AG04449 (cell line): ENCODE measurements at regions of chr1 and their contacts with region 1.

Region 1: GRCh38 chr1:191993549-191993948 is 164.7 kb upstream of the RGS18 start:
- DNase-seq: peak; percentile 14
- H3K4me3 ChIP-seq: no peak overlapping the region
- CTCF ChIP-seq: peak; percentile 35

Region 2: DNA sequence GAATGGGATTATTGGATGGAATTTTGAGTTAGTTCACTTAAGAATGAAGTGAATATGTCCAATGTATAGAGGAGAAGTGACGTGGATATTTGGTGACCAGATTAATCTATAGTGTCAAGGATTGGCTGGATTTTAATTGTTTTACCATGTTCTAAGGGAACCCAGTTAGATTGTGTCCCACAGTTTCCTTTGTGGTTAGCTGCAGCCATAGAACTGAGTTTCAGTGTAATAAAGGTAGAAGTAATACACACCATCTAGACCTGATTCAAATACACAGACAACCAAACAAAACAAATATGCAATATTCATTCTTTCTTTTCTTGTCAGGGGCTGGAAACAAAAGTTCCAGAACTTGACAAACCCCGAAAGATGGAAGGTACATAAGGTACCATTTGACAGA is 76.7 kb after region 1 on chr1:
- CTCF ChIA-PET with region 1: no interaction called
- POLR2A ChIA-PET with region 1: no interaction called
- DNase-seq: no peak
- H3K4me3 ChIP-seq: no peak overlapping the region
- CTCF ChIP-seq: no peak

Region 3: DNA sequence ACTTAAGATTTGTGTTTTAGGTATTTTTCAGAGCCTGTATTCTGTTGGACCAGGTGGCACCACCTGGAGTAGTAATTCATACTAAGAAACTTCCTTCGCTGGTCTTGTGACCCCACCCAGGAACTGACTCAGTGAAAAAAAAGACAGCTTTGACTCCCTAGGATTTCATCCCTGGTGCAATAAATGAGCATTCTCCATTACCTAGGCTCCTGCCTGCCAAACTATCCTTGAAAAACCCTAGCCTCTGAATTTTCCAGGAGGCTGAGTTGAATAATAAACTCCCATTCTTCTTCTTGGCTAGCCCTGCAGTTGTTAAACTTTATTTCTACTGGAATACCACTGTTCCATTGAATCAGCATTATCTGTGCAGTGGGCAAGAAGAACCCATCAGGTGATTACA is 154.1 kb after region 1 on chr1:
- CTCF ChIA-PET with region 1: interaction called, 10 read pairs
- POLR2A ChIA-PET with region 1: no interaction called
- DNase-seq: no peak
- H3K4me3 ChIP-seq: no peak overlapping the region
- CTCF ChIP-seq: no peak

Region 4: DNA sequence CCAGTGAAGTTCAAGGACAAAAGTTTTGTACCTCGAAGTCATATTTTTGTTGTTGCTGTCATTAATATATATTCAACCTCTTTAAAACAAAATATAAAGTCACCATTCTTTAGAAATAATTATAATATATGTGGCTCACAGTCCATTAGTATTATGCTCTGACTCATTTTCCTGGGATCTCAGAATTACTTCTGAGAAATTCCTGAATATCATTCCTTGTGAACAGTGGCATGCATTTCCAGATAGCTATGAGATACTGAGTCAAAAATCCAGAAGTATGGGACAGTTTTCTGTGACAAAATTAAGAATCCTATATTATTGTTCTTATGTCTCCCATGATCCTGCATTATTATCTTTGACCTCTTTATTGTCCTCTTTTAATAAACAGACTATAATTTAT is 309.5 kb after region 1 on chr1:
- CTCF ChIA-PET with region 1: interaction called, 31 read pairs
- POLR2A ChIA-PET with region 1: no interaction called
- DNase-seq: no peak
- H3K4me3 ChIP-seq: no peak overlapping the region
- CTCF ChIP-seq: no peak

Region 5: GRCh38 chr1:192311281-192311680 is 317.7 kb after region 1 on chr1:
- CTCF ChIA-PET with region 1: interaction called, 62 read pairs
- POLR2A ChIA-PET with region 1: no interaction called
- DNase-seq: peak; percentile 16
- H3K4me3 ChIP-seq: no peak overlapping the region
- CTCF ChIP-seq: peak; percentile 64

Region 6: DNA sequence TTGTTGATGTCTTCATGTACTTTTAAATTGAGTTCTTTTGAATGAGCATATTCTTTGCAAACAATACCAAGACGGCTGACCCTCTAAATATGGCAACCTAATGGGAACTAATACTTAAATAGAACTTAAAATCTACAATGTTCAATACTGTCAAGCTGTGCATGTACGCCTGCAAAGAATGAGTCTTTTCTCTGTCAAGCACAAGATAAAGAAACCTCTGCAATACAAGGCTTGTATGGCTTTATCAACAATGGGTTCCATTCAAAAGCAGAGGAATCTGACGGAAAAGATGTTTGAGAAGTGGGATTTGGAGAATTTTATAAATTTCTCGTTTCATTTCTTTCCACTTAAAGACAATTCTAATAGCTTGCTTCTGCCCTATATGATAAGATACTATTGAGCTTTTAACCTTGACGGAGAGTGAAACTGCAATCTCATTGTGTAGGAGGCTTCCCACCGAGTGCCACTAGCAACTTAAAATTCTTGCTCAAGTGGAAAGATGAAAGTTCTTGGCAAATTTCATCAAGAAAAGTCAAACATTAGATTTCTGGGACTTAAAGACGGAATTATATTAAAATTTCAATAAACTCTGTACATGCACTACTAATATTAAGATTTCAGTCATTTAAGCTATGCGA is 443.0 kb after region 1 on chr1:
- CTCF ChIA-PET with region 1: interaction called, 11 read pairs
- POLR2A ChIA-PET with region 1: no interaction called
- DNase-seq: no peak
- H3K4me3 ChIP-seq: no peak overlapping the region
- CTCF ChIP-seq: no peak

Region 7: GRCh38 chr1:192445848-192446489 is 452.4 kb after region 1 on chr1:
- CTCF ChIA-PET with region 1: interaction called, 16 read pairs
- POLR2A ChIA-PET with region 1: no interaction called
- DNase-seq: no peak
- H3K4me3 ChIP-seq: no peak overlapping the region
- CTCF ChIP-seq: peak; percentile 18